ENCODE measurements at regions of chr12 and their contacts with region 1.

Region 1: DNA sequence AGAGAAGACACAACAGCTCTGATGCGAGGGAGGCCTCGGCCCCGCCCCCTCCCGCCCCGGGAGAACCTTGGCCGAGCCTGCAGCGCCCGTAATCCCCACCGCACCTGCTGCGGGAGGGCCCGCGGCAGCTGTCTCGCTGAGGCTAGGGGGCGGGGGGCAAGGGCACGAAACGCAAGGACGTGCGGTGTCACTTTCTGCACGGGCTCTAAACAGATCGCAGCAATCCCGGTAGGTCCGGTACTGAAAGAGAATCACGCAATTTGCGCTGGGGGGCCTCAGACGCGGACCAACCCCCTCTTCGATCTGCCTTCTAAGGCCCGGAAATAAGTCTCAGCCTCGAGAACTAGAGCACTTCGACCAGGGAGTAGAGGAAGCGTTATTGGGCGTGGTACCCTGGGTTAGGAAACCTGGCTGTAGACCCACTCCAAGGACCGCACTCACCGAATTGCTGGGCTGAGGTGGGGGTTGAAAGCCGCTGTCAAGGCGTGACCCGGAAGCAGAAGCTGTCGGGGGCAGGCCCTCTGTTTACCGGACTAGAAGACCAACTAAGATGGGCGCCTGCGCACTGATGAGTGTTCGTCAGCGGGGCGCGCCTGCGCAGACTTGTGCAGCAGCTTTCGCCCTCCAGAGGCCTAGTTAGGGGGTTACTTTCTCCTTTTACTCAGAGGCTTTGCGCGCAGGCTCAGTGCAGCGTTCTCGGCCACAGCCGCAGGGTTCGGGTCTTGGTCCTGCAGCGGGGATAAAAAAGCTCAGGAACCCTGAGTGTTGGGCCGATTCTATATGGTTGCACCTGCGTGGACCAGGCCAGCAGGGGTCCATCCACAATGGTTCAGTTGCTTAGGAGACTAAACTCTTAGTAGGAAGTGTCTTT is at the start of gene ASB8:
- DNase-seq: peak; percentile 100
- H3K4me3 Mint-ChIP-seq: peak within 1 kb of the TSS; percentile 93
- H3K27ac Mint-ChIP-seq: peak within 1 kb of the TSS; percentile 96
- H3K4me1 Mint-ChIP-seq: peaks cover 47% of the 10 kb centered on the region
- H3K27me3 Mint-ChIP-seq: no peaks in the 10 kb centered on the region
- total RNA-seq, gene ASB8: 36.7 to 47.9 TPM

Region 2: GRCh38 chr12:46217541-46218321 is 1939.5 kb before region 1 on chr12:
- CTCF ChIA-PET with region 1: no interaction called
- intact Hi-C with region 1: no loop called
- DNase-seq: peak; percentile 74
- H3K4me3 Mint-ChIP-seq: peak overlapping the region; percentile 33
- H3K27ac Mint-ChIP-seq: peak overlapping the region; percentile 100
- H3K4me1 Mint-ChIP-seq: peaks cover 95% of the 10 kb centered on the region
- H3K27me3 Mint-ChIP-seq: no peaks in the 10 kb centered on the region

Region 3: GRCh38 chr12:47517122-47517521 is 640.1 kb before region 1 on chr12:
- CTCF ChIA-PET with region 1: no interaction called
- intact Hi-C with region 1: no loop called
- DNase-seq: no peak
- H3K4me3 Mint-ChIP-seq: no peak overlapping the region
- H3K27ac Mint-ChIP-seq: no peak overlapping the region
- H3K4me1 Mint-ChIP-seq: no peaks in the 10 kb centered on the region
- H3K27me3 Mint-ChIP-seq: no peaks in the 10 kb centered on the region

Region 4: DNA sequence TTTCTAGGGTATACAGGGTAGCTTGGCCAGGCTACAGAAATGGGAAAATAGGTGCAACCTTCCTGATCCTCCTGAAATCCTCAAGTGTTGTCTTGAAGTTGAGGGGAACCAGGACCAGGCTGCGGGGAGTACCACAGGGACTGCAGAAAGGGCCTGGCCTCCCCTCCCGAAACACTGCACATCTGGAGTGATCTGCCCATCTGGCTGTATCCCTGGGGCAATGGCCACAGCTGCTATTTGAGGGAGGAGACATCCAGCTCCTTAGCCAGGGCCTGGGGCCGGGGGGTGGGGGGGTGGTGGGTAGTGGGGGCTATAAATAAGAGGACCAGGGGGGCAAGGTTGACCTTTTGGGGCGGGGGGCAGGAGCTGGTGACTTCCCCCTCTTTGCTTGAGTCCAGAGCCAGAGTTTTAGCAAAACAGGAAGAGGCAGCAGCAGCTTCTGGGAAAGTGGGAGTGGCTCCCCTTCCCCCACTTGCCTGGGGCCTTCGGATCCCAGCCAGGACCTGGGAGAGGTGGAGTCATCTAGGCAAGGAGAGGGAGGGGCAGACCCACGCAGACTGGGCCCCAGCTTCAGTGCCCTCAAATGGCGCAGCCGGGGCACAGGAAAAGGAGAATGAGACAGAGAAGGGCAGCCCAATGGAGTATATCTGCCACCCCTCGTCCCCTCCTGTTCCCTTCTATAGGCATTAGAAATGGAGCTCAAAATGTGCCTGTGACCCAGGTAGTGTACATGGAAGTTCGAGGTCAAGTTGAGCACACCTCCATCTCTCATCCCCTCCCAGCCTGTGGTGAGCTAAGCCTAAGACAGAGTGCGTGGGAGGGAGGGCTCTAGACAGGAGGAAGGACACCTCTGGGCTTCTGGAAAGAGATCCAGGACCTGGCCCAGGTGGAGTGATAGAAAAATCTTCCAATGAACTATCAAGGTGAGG is 328.4 kb before region 1 on chr12:
- CTCF ChIA-PET with region 1: no interaction called
- intact Hi-C with region 1: loop called (anchors 1 kb)
- DNase-seq: peak; percentile 63
- H3K4me3 Mint-ChIP-seq: peak overlapping the region; percentile 63
- H3K27ac Mint-ChIP-seq: peak overlapping the region; percentile 86
- H3K4me1 Mint-ChIP-seq: peaks cover 86% of the 10 kb centered on the region
- H3K27me3 Mint-ChIP-seq: no peaks in the 10 kb centered on the region

Region 5: GRCh38 chr12:47904713-47905310 is 252.4 kb before region 1 on chr12 and contains the start of gene VDR:
- CTCF ChIA-PET with region 1: no interaction called
- intact Hi-C with region 1: loop called (anchors 1 kb)
- DNase-seq: peak; percentile 81
- H3K4me3 Mint-ChIP-seq: peak within 1 kb of the TSS; percentile 98
- H3K27ac Mint-ChIP-seq: peak within 1 kb of the TSS; percentile 93
- H3K4me1 Mint-ChIP-seq: peaks cover 42% of the 10 kb centered on the region
- H3K27me3 Mint-ChIP-seq: peaks cover 19% of the 10 kb centered on the region
- total RNA-seq, gene VDR: 56.4 to 57.7 TPM

Region 6: DNA sequence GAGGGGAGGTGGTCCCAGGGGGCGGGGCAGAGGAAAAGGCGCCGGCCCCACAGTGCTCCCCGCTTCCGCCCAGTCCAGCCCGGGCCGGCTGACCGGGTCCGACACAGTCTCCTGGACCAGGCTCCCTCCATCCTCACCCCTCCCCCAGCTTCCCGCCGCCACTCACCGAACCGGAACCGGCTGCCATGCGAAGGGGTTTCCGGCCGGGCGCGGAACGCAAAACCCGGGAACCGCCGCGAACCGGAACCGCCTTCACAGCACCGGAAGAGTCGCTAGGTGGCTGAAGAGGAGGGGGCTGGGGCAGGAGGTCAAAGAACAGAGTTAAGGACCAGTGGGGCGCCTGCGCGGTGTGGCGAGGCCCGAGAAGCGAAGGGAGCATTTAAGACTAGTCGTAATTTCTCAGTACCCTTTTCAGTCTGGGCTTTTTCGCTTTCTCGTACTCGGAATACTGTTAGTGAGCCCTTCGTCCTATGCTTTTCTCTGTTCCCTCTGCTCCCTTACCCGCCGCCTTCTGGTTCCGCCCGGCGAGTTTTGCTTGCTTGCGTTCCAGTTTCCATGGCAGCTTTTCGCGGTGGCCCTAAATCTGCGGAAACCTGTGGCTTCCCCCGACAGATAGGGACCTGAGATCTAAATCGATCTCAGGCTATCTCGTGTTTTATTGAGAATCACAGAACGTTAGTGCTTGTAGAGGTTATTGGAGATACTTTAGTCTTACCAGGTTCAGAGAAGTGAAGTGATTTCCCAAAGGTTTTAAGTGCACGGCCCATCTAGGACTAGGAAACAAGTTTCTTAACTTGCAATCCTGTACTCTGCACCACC is 51.2 kb before region 1 on chr12 and contains the start of gene SENP1:
- CTCF ChIA-PET with region 1: interaction called, 3 read pairs
- intact Hi-C with region 1: loop called (anchors 1 kb)
- DNase-seq: peak; percentile 94
- H3K4me3 Mint-ChIP-seq: peak within 1 kb of the TSS; percentile 87
- H3K27ac Mint-ChIP-seq: peak within 1 kb of the TSS; percentile 96
- H3K4me1 Mint-ChIP-seq: peaks cover 47% of the 10 kb centered on the region
- H3K27me3 Mint-ChIP-seq: no peaks in the 10 kb centered on the region
- total RNA-seq, gene SENP1: 41.4 to 47.8 TPM

Region 7: GRCh38 chr12:48119078-48119833 is 38.0 kb before region 1 on chr12 and contains the start of gene PFKM:
- CTCF ChIA-PET with region 1: no interaction called
- intact Hi-C with region 1: loop called (anchors 1 kb)
- DNase-seq: peak; percentile 86
- H3K4me3 Mint-ChIP-seq: peak within 1 kb of the TSS; percentile 93
- H3K27ac Mint-ChIP-seq: peak within 1 kb of the TSS; percentile 51
- H3K4me1 Mint-ChIP-seq: peaks cover 19% of the 10 kb centered on the region
- H3K27me3 Mint-ChIP-seq: no peaks in the 10 kb centered on the region
- total RNA-seq, gene PFKM: 68.2 to 71.9 TPM

Region 8: GRCh38 chr12:48183091-48183875 is 26.0 kb after region 1 on chr12 and contains the start of gene CCDC184:
- CTCF ChIA-PET with region 1: interaction called, 6 read pairs
- intact Hi-C with region 1: loop called (anchors 2 kb)
- DNase-seq: peak; percentile 70
- H3K4me3 Mint-ChIP-seq: peak within 1 kb of the TSS; percentile 88
- H3K27ac Mint-ChIP-seq: no peak within 1 kb of the TSS
- H3K4me1 Mint-ChIP-seq: peaks cover 12% of the 10 kb centered on the region
- H3K27me3 Mint-ChIP-seq: peaks cover 15% of the 10 kb centered on the region
- total RNA-seq, gene CCDC184: 0.14 TPM in 1 of 2 experiments, not detected in the other

Region 9: DNA sequence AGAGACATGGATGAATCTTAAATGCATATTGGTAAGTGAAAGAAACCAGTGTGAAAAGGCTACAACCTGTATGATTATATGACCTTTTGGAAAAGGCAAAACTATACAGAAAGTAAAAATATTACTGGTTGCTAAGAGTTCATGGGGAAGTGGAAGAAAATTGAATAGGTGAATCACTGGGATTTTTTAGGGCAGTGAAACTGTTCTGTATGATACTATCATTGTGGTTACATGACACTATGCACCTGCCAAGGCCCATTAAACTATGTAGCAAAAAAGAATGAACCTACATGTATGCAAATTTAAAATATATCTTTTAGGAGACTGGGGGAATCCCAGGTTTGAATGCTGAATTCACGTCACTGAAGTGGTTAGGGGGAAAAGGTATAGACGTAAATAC is 355.6 kb after region 1 on chr12:
- CTCF ChIA-PET with region 1: no interaction called
- intact Hi-C with region 1: loop called (anchors 1 kb)
- DNase-seq: peak; percentile 61
- H3K4me3 Mint-ChIP-seq: peak overlapping the region; percentile 6
- H3K27ac Mint-ChIP-seq: peak overlapping the region; percentile 74
- H3K4me1 Mint-ChIP-seq: peaks cover 27% of the 10 kb centered on the region
- H3K27me3 Mint-ChIP-seq: no peaks in the 10 kb centered on the region

Measured in activated naive CD4-positive, alpha-beta T cell treated with anti-CD3 and anti-CD28 coated beads for 36 hours (primary cell).